Gastrocnemius medialis (tissue), 4 donors: ENCODE measurements at regions of chr5 and their contacts with region 1.

Region 1: DNA sequence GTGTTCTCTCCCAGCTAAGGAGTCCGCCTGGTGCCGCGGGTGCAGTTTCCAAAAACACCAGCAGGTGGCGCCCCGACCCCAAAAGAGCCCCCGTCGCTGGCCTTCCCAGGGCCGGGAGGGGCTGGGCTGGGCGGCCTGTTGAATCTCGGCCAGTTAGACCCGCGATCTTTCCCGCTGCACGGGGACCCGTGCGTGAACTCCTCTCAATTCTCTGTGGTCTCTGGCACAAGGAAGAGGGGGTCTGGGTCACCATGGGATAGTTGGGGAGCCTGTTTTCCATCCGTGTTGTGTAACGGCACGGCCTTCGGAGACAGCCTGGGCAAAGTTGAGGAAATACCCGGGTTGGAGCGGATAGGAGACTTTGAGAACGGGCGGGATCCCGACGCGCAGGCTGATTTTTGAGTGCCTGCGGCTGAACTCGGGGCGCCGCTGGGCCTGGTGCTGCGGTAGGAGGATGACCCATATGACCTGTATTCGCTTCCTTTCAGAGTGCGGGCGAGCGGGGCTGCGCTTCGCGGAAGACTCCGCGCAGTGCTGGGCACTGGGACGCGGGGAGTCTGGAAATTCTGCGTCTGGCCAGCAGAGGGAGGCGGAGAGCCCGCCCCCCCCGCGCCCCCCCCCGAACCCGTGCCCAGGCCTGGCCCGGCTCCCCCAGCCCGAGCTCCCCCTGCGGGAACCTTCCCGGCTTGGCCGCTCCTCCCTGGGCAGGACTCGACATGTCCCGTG is 7.9 kb upstream of the PSD2 start:
- DNase-seq: peak; percentile 65 to 83
- ATAC-seq: peak; percentile 77 to 79
- H3K4me3 ChIP-seq: peak overlapping the region; percentile 64 to 90 (median 67)
- H3K27ac ChIP-seq: peak overlapping the region; percentile 84 to 92 (median 88)
- H3K4me1 ChIP-seq: peaks cover 14 to 17% of the 10 kb centered on the region in 2 donors
- H3K27me3 ChIP-seq: no peaks in the 10 kb centered on the region
- CTCF ChIP-seq: peak; percentile 89 to 99 (median 97)
- POLR2A ChIP-seq: no peak

Region 2: GRCh38 chr5:139797856-139798510 is 10.3 kb after region 1 on chr5:
- in situ Hi-C with region 1: no loop called
- intact Hi-C with region 1: no loop called
- DNase-seq: no peak
- ATAC-seq: no peak
- H3K4me3 ChIP-seq: no peak overlapping the region
- H3K27ac ChIP-seq: no peak overlapping the region
- H3K4me1 ChIP-seq: peaks cover 0 to 7% of the 10 kb centered on the region in 2 donors
- H3K27me3 ChIP-seq: peaks cover 20 to 28% (median 22%) of the 10 kb centered on the region in 3 donors
- CTCF ChIP-seq: no peak
- POLR2A ChIP-seq: no peak

Region 3: GRCh38 chr5:139844472-139845145 is 56.9 kb after region 1 on chr5:
- in situ Hi-C with region 1: loop called in 1 of 4 experiments (anchors 10 kb)
- intact Hi-C with region 1: loop called (anchors 1 kb)
- DNase-seq: peak; percentile 20 to 68
- ATAC-seq: peak in 1 of 2 donors; percentile 13
- H3K4me3 ChIP-seq: no peak overlapping the region
- H3K27ac ChIP-seq: no peak overlapping the region
- H3K4me1 ChIP-seq: peaks cover 0 to 11% of the 10 kb centered on the region in 2 donors
- H3K27me3 ChIP-seq: no peaks in the 10 kb centered on the region
- CTCF ChIP-seq: peak; percentile 46 to 77 (median 65)
- POLR2A ChIP-seq: no peak

Region 4: GRCh38 chr5:139949710-139950109 is 162.0 kb after region 1 on chr5:
- in situ Hi-C with region 1: no loop called
- intact Hi-C with region 1: loop called (anchors 5 kb)
- DNase-seq: peak in 1 of 2 donors; percentile 79
- ATAC-seq: peak in 1 of 2 donors; percentile 28
- H3K4me3 ChIP-seq: no peak overlapping the region
- H3K27ac ChIP-seq: peak overlapping the region; percentile 69 to 87 (median 80)
- H3K4me1 ChIP-seq: peaks cover 50 to 53% of the 10 kb centered on the region in 2 donors
- H3K27me3 ChIP-seq: no peaks in the 10 kb centered on the region
- CTCF ChIP-seq: no peak
- POLR2A ChIP-seq: no peak

Region 5: GRCh38 chr5:140042643-140043500 is 255.1 kb after region 1 on chr5 and contains the start of gene NRG2:
- in situ Hi-C with region 1: no loop called
- intact Hi-C with region 1: loop called (anchors 1 kb)
- DNase-seq: peak; percentile 67 to 86
- ATAC-seq: peak; percentile 21 to 51
- H3K4me3 ChIP-seq: peak within 1 kb of the TSS; percentile 82 to 97 (median 87)
- H3K27ac ChIP-seq: peak within 1 kb of the TSS; percentile 98 to 99 (median 98)
- H3K4me1 ChIP-seq: peaks cover 22 to 29% of the 10 kb centered on the region in 2 donors
- H3K27me3 ChIP-seq: no peaks in the 10 kb centered on the region
- CTCF ChIP-seq: peak; percentile 68 to 84 (median 72)
- POLR2A ChIP-seq: peak; percentile 74 to 79
- total RNA-seq, gene NRG2: 10.3 to 28.8 (median 20.0) TPM

Region 6: DNA sequence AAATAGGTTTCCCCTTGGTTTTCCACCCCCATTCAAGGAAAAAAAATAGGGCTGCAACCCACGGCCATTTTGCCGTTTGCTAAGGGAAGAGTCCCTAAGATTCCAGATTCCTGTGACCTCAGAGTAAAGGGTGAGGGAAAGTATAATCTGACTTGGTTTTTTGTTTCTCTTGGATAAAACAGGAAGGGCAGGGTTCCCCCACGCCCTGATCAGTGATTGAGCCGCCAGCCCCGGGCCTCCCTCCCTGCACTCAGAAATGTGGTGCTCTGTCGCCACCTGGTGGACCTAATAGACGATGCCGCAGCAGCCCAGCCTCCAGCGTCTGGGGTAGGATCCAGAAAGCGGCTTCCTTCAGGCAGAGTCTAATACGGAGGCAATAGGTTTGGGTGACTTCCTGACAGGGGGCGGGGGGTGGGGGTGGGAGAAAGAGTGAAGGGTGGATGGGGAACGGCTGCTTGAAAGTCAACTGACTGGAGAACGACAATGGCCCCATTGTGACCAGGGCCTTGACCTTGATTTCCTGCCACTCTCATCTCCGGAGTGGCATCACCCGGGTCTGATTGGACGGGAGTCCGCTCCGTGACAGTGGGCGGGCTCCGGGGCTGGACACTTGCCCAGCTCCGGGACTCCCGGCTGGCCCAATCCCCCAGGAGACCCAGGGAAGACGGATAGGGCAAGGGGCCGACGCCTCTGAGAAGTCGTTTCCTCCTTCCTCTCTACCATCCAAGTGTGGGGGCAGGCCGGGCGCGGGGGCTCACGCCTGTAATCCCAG is 369.5 kb after region 1 on chr5:
- in situ Hi-C with region 1: loop called (anchors 5 to 10 kb)
- intact Hi-C with region 1: loop called (anchors 1 kb)
- DNase-seq: peak; percentile 70 to 80
- ATAC-seq: peak; percentile 93 to 96
- H3K4me3 ChIP-seq: peak overlapping the region; percentile 38 to 65 (median 50)
- H3K27ac ChIP-seq: peak overlapping the region in 3 of 4 donors; percentile 52 to 55 (median 54)
- H3K4me1 ChIP-seq: peaks cover 7 to 11% of the 10 kb centered on the region in 2 donors
- H3K27me3 ChIP-seq: no peaks in the 10 kb centered on the region
- CTCF ChIP-seq: peak; percentile 88 to 93 (median 91)
- POLR2A ChIP-seq: no peak